ENCODE measurements at regions of chr16 and their contacts with region 1.

Region 1: DNA sequence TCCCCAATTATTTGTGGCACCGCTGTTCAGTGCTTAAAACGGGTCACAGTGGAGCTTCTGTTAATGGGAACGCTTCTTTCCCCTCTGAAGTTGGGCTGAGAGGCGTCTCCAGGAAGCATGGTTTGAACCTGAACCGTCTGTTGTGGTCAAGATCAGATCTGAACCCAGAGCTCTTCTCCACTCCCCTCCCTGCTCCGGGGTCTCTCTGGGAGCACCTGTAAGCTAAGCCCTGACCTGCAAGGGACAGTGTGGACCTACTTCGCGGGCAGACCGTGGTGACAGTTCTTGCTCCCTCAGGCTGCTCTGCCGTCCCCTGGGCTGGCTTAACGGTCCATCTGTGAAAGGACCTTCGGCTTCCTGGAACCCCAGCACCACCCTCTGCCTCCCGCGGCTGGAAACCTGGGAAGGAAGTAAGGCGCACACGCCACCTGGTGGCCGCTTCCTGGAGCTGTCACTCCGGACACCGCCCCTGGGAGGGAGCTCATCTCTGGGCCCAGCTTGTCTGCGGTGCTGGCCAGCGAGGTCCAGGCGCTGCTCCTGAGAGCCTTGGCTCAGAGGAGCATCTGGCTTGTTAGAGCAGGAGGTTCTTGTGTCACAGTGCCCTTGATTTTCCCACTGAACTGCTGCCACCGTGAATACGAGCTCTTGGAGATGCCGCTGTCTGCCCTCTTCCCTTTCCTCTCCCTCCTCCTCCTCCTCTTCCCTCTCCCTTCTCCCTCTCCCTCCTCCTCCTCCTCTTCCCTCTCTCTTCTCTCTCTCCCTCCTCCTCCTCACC is 518.5 kb upstream of the EEF2KMT start:
- DNase-seq: peak; percentile 62 to 88
- H3K4me3 ChIP-seq: peak overlapping the region; percentile 34 to 57 (median 39); a peak in 5 of 8 replicates
- H3K27ac ChIP-seq: no peak overlapping the region
- H3K4me1 ChIP-seq: peaks cover 0 to 2% (median under 1%) of the 10 kb centered on the region in 4 experiments; a peak in 1 of 7 replicates
- H3K27me3 ChIP-seq: no peaks in the 10 kb centered on the region
- CTCF ChIP-seq: peak; percentile 94 to 96 (median 95)
- EP300 ChIP-seq: no peak
- POLR2A ChIP-seq: no peak
- RAD21 ChIP-seq: peak; percentile 91 to 92

Region 2: DNA sequence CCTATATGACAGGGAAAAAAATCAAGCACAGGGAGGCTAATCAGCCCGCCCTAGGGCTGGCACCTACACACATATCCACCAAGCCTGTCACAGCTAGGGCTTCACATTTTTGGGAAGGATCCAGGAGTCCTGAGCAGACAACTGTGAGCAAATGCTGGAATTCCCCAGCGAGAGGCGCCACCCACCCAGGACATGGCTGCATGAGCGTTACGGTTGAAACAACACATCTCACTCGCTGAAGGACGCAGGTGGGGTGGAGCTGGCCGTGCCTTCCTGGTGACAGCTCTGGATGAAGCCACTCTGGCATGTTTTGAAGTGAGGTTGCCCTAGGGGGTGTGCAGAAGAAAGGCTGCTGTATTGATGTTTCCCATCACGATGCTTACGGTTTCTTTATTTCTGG is 203.3 kb before region 1 on chr16:
- CTCF ChIA-PET with region 1: interaction called, 14 read pairs
- POLR2A ChIA-PET with region 1: no interaction called
- DNase-seq: peak in 1 of 2 experiments; percentile 70
- H3K4me3 ChIP-seq: no peak overlapping the region
- H3K27ac ChIP-seq: no peak overlapping the region
- H3K4me1 ChIP-seq: peaks cover 0 to 6% (median under 1%) of the 10 kb centered on the region in 4 experiments; a peak in 2 of 7 replicates
- H3K27me3 ChIP-seq: no peaks in the 10 kb centered on the region
- CTCF ChIP-seq: peak; percentile 76 to 82 (median 78)
- EP300 ChIP-seq: no peak
- POLR2A ChIP-seq: no peak
- RAD21 ChIP-seq: peak; percentile 85 to 91

Region 3: DNA sequence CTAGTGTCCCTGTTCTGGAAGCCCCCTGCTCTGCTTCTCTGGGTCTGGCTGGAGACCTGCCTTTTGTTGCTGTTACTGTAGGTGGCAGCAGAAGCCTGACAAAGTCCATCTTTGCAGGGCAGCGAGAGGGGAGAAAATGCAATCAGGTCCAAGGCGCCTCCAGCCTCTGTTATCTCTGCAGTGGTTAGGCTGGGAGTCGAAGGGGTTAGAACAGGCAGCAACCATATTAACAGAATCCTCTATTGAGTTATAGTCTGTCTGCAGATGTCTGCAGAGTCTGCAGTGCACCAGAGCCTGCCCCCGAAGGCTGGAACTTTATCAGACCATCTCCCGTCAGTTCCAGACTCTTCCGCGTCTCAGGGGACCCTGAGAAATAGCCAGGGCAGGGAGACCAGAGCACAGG is 113.6 kb before region 1 on chr16:
- CTCF ChIA-PET with region 1: interaction called, 108 read pairs
- POLR2A ChIA-PET with region 1: no interaction called
- DNase-seq: peak; percentile 39 to 73
- H3K4me3 ChIP-seq: no peak overlapping the region
- H3K27ac ChIP-seq: no peak overlapping the region
- H3K4me1 ChIP-seq: 0 out of 7 replicates have a peak, but pooled peaks cover 0 to 6% (median 0%) of the 10 kb centered on the region in 4 experiments
- H3K27me3 ChIP-seq: no peaks in the 10 kb centered on the region
- CTCF ChIP-seq: peak; percentile 71 to 93 (median 91)
- EP300 ChIP-seq: no peak
- POLR2A ChIP-seq: no peak
- RAD21 ChIP-seq: peak; percentile 96 to 98

Region 4: GRCh38 chr16:5509793-5510192 is 106.3 kb before region 1 on chr16:
- CTCF ChIA-PET with region 1: interaction called, 108 read pairs
- POLR2A ChIA-PET with region 1: no interaction called
- DNase-seq: no peak
- H3K4me3 ChIP-seq: no peak overlapping the region
- H3K27ac ChIP-seq: no peak overlapping the region
- H3K4me1 ChIP-seq: peaks cover 0 to 5% (median 3%) of the 10 kb centered on the region in 4 experiments; a peak in 3 of 7 replicates
- H3K27me3 ChIP-seq: no peaks in the 10 kb centered on the region
- CTCF ChIP-seq: no peak
- EP300 ChIP-seq: no peak
- POLR2A ChIP-seq: no peak
- RAD21 ChIP-seq: no peak

Region 5: DNA sequence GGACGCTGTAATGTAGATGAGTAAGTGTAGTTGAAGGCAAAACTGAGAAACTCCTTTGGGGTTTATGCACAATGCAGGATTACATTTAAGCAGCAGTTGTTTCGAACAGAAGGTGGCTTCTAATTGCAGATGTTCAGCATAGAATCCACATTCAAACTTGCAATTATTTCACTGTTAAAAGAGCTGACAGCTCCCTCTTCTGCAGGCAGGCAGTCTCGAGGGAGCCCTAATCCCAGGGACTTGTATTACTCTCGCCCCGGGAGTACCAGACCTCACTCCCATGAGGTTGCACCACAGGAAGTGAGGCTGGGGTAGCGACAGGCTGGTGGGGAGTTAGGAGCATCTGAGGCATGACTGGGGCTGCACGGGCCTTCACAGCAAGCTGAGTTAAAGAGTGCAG is 34.1 kb before region 1 on chr16:
- CTCF ChIA-PET with region 1: interaction called, 11 read pairs
- POLR2A ChIA-PET with region 1: no interaction called
- DNase-seq: no peak
- H3K4me3 ChIP-seq: no peak overlapping the region
- H3K27ac ChIP-seq: no peak overlapping the region
- H3K4me1 ChIP-seq: no peaks in the 10 kb centered on the region; a peak in 3 of 7 replicates
- H3K27me3 ChIP-seq: no peaks in the 10 kb centered on the region
- CTCF ChIP-seq: no peak
- EP300 ChIP-seq: no peak
- POLR2A ChIP-seq: no peak
- RAD21 ChIP-seq: no peak

Region 6: DNA sequence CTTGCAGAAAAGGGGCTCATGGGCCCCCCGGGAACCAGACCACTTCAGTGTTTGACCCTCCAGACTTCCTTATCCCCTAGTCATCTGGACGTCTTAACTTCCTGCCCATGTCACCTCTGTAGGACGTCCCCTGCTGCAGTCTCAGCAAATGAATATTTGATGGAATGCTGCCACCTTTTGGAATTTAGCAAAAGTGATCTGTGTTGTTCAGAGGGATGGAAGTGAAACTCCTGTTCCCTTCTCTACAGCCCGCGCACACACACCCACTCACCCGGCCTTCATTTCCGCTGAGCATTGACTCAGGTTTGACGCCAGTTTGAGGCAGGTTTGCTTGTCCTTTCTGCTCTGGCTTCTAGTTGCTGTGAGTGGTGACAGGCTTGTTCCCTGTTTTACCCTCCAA is 11.3 kb before region 1 on chr16:
- CTCF ChIA-PET with region 1: interaction called, 26 read pairs
- POLR2A ChIA-PET with region 1: no interaction called
- DNase-seq: no peak
- H3K4me3 ChIP-seq: no peak overlapping the region
- H3K27ac ChIP-seq: no peak overlapping the region
- H3K4me1 ChIP-seq: peaks cover 0 to 6% (median 2%) of the 10 kb centered on the region in 4 experiments; a peak in 3 of 7 replicates
- H3K27me3 ChIP-seq: no peaks in the 10 kb centered on the region
- CTCF ChIP-seq: peak in 2 of 3 experiments; percentile 54 to 61; a peak in 3 of 4 replicates
- EP300 ChIP-seq: no peak
- POLR2A ChIP-seq: no peak
- RAD21 ChIP-seq: peak; percentile 82 to 84

Region 7: GRCh38 chr16:5633845-5634440 is 17.9 kb after region 1 on chr16:
- CTCF ChIA-PET with region 1: interaction called, 78 read pairs
- POLR2A ChIA-PET with region 1: interaction called, 3 read pairs
- DNase-seq: no peak
- H3K4me3 ChIP-seq: no peak overlapping the region
- H3K27ac ChIP-seq: no peak overlapping the region
- H3K4me1 ChIP-seq: no peaks in the 10 kb centered on the region
- H3K27me3 ChIP-seq: no peaks in the 10 kb centered on the region
- CTCF ChIP-seq: peak in 2 of 3 experiments; percentile 56 to 75; a peak in 3 of 4 replicates
- EP300 ChIP-seq: no peak
- POLR2A ChIP-seq: no peak
- RAD21 ChIP-seq: peak; percentile 59 to 68

Region 8: GRCh38 chr16:5649762-5650743 is 34.0 kb after region 1 on chr16:
- CTCF ChIA-PET with region 1: no interaction called
- POLR2A ChIA-PET with region 1: no interaction called
- DNase-seq: no peak
- H3K4me3 ChIP-seq: no peak overlapping the region
- H3K27ac ChIP-seq: no peak overlapping the region
- H3K4me1 ChIP-seq: peaks cover 0 to 5% (median 2%) of the 10 kb centered on the region in 4 experiments; a peak in 3 of 7 replicates
- H3K27me3 ChIP-seq: no peaks in the 10 kb centered on the region
- CTCF ChIP-seq: peak in 1 of 3 experiments; percentile 11; a peak in 1 of 4 replicates
- EP300 ChIP-seq: no peak
- POLR2A ChIP-seq: no peak
- RAD21 ChIP-seq: no peak

Measured in H1 (cell line).